ENCODE measurements at regions of chr11 and their contacts with region 1.

Region 1: GRCh38 chr11:62678770-62679696 is at the start of gene UBXN1:
- DNase-seq: peak; percentile 63 to 84 (median 81)
- ATAC-seq: peak; percentile 91
- H3K4me3 ChIP-seq: peak within 1 kb of the TSS; percentile 87
- H3K4me3 Mint-ChIP-seq: peak within 1 kb of the TSS; percentile 86 to 93 (median 90)
- H3K27ac ChIP-seq: peak within 1 kb of the TSS; percentile 98
- H3K27ac Mint-ChIP-seq: peak within 1 kb of the TSS; percentile 88 to 98 (median 94)
- H3K4me1 ChIP-seq: peaks cover 13 to 15% of the 10 kb centered on the region in 2 donors
- H3K4me1 Mint-ChIP-seq: peaks cover 19 to 41% (median 37%) of the 10 kb centered on the region in 7 donors
- H3K27me3 ChIP-seq: no peaks in the 10 kb centered on the region
- H3K27me3 Mint-ChIP-seq: no peaks in the 10 kb centered on the region
- total RNA-seq, gene UBXN1: 114 to 215 (median 207) TPM

Region 2: GRCh38 chr11:63023841-63024648 is 345.0 kb after region 1 on chr11:
- CTCF ChIA-PET with region 1: no interaction called
- POLR2A ChIA-PET with region 1: no interaction called
- intact Hi-C with region 1: loop called in 1 of 2 experiments (anchors 2 kb)
- DNase-seq: peak; percentile 51 to 86 (median 72)
- ATAC-seq: peak; percentile 98
- H3K4me3 ChIP-seq: no peak overlapping the region
- H3K4me3 Mint-ChIP-seq: peak overlapping the region in 1 of 10 donors; percentile 12
- H3K27ac ChIP-seq: no peak overlapping the region
- H3K27ac Mint-ChIP-seq: no peak overlapping the region
- H3K4me1 ChIP-seq: no peaks in the 10 kb centered on the region
- H3K4me1 Mint-ChIP-seq: peaks cover 0 to 6% (median 4%) of the 10 kb centered on the region in 7 donors
- H3K27me3 ChIP-seq: no peaks in the 10 kb centered on the region
- H3K27me3 Mint-ChIP-seq: peaks cover 5 to 28% (median 19%) of the 10 kb centered on the region in 5 donors